ENCODE measurements at regions of chr5 and their contacts with region 1.

Region 1: DNA sequence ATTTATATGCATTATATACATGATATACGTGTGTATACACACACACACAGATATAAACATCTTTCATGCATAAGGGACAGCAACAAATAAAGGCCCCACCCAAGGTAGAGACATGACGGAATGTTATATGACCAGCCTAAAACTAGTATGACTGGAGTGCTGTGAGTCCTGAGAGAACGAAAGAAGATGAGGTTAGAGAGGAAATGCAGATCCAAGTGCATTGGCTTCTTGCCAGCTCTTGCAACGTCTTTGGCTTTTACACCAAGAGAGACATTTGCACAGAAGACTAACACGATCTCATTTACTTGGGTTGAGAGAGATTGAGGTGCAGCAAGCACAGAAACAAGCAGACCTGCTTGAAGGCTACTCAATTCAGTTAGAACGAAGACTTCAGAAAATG is 23.0 kb downstream of the CDH10 start:
- DNase-seq: no peak
- H3K4me3 ChIP-seq: no peak overlapping the region
- H3K27ac ChIP-seq: no peak overlapping the region
- H3K4me1 ChIP-seq: no peaks in the 10 kb centered on the region
- H3K27me3 ChIP-seq: no peaks in the 10 kb centered on the region
- CTCF ChIP-seq: no peak

Region 2: GRCh38 chr5:24585751-24586150 is 36.0 kb before region 1 on chr5:
- CTCF ChIA-PET with region 1: no interaction called
- POLR2A ChIA-PET with region 1: interaction called, 11 read pairs
- intact Hi-C with region 1: no loop called
- DNase-seq: no peak
- H3K4me3 ChIP-seq: no peak overlapping the region
- H3K27ac ChIP-seq: no peak overlapping the region
- H3K4me1 ChIP-seq: no peaks in the 10 kb centered on the region
- H3K27me3 ChIP-seq: no peaks in the 10 kb centered on the region
- CTCF ChIP-seq: no peak

Measured in PC-9 (cell line).